MCF 10A (cell line): ENCODE measurements at regions of chr5 and their contacts with region 1.

Region 1: GRCh38 chr5:32916648-32917047 is 205.5 kb downstream of the NPR3 start:
- DNase-seq: peak; percentile 66
- H3K4me3 Mint-ChIP-seq: no peak overlapping the region
- H3K27ac Mint-ChIP-seq: no peak overlapping the region
- H3K4me1 Mint-ChIP-seq: no peaks in the 10 kb centered on the region
- H3K27me3 Mint-ChIP-seq: no peaks in the 10 kb centered on the region
- CTCF ChIP-seq: peak; percentile 64

Region 2: DNA sequence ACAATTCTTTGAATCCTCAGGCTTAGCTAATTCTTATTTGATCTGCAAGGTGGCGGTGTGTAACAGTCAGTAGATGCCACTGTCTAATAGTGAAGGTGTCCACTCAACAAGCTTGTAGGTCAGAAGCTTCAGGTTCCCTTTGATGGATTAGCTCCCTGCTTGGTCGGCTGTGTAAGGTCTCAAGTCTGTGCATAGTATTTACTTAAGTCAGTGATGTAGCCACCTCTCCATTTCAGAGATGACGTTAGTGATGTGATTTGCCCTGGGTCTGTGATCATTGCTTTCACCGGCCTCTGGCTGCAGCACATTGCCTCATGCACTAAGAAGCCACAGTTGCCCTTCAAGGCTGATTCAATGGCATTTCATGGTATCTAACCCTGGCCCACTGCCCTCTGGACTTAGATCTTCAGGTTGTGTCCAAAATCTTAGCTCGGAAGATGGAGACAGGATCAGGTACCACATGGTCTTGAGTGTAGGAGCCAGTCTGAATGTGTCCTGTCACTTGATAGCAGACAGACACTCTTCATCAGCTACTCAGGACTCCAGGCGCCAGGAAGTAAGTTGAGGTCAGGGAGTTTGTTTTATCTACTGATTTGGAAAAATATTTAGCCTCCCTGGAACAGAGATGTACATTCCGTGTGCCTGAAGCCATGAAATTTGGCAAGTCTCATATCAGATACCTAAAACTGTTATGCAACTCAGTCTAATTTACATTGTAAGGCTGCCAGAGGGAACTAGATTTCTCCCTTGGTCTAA is 288.4 kb before region 1 on chr5:
- CTCF ChIA-PET with region 1: interaction called, 9 read pairs
- POLR2A ChIA-PET with region 1: no interaction called
- intact Hi-C with region 1: loop called (anchors 1 kb)
- DNase-seq: peak; percentile 43
- H3K4me3 Mint-ChIP-seq: no peak overlapping the region
- H3K27ac Mint-ChIP-seq: no peak overlapping the region
- H3K4me1 Mint-ChIP-seq: peaks cover 14% of the 10 kb centered on the region
- H3K27me3 Mint-ChIP-seq: no peaks in the 10 kb centered on the region
- CTCF ChIP-seq: no peak

Region 3: DNA sequence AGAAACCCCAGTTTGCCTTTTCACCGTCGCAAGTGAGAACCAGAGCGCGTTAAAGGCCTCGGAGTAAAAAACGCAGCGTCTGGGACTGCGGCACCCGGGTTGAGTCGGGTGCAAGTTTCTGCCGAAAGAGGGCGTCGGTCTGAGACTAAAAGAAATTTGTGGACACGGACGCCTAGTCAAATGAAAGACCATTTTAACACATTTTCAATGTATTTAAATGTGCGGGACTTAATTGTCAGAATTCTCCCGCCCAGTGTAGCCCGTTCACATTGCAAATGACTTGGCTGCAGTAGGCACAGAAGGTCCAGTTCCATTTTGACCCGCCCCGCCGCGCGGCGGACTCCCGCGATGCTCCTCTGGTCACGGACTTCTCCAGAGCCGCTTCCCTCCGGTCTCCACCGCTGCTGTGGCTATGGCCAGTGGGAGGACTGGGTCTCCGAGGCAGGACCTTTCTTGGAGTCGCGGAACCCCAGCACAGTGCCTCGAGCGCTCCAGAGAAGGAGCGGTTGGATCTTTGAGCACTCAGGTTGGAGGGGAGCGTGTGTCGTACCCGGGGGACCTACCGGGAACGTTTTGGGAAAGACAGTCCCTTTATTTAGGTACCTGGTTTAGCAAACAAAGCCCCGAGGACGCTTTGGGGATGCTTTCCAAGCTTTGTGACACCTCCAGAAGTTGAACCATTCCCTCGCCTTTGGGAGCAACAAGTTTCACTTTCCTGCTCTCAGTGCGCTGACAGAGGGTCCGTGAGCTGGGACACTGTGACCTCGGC is 206.7 kb before region 1 on chr5:
- CTCF ChIA-PET with region 1: interaction called, 47 read pairs
- POLR2A ChIA-PET with region 1: interaction called, 4 read pairs
- intact Hi-C with region 1: loop called (anchors 1 kb)
- DNase-seq: peak; percentile 79
- H3K4me3 Mint-ChIP-seq: peak overlapping the region; percentile 83
- H3K27ac Mint-ChIP-seq: peak overlapping the region; percentile 25
- H3K4me1 Mint-ChIP-seq: peaks cover 6% of the 10 kb centered on the region
- H3K27me3 Mint-ChIP-seq: no peaks in the 10 kb centered on the region
- CTCF ChIP-seq: peak; percentile 64

Region 4: GRCh38 chr5:33299621-33300208 is 383.1 kb after region 1 on chr5:
- CTCF ChIA-PET with region 1: interaction called, 8 read pairs
- POLR2A ChIA-PET with region 1: no interaction called
- intact Hi-C with region 1: loop called (anchors 5 kb)
- DNase-seq: peak; percentile 77
- H3K4me3 Mint-ChIP-seq: peak overlapping the region; percentile 26
- H3K27ac Mint-ChIP-seq: peak overlapping the region; percentile 69
- H3K4me1 Mint-ChIP-seq: peaks cover 18% of the 10 kb centered on the region
- H3K27me3 Mint-ChIP-seq: no peaks in the 10 kb centered on the region
- CTCF ChIP-seq: peak; percentile 50